ENCODE measurements at regions of chr22 and their contacts with region 1.

Region 1: GRCh38 chr22:35921777-35922176 is 106.8 kb downstream of the RBFOX2 start:
- DNase-seq: peak in 1 of 3 donors; percentile 79
- ATAC-seq: peak; percentile 95
- H3K4me3 ChIP-seq: no peak overlapping the region
- H3K4me1 ChIP-seq: peaks cover 6% of the 10 kb centered on the region
- CTCF ChIP-seq: no peak

Region 2: GRCh38 chr22:35430897-35431322 is 490.9 kb before region 1 on chr22:
- intact Hi-C with region 1: loop called in 1 of 2 experiments (anchors 10 kb)
- DNase-seq: peak; percentile 88 to 94 (median 93)
- ATAC-seq: peak; percentile 99
- H3K4me3 ChIP-seq: no peak overlapping the region
- H3K4me1 ChIP-seq: peaks cover 7% of the 10 kb centered on the region
- CTCF ChIP-seq: peak; percentile 80

Region 3: DNA sequence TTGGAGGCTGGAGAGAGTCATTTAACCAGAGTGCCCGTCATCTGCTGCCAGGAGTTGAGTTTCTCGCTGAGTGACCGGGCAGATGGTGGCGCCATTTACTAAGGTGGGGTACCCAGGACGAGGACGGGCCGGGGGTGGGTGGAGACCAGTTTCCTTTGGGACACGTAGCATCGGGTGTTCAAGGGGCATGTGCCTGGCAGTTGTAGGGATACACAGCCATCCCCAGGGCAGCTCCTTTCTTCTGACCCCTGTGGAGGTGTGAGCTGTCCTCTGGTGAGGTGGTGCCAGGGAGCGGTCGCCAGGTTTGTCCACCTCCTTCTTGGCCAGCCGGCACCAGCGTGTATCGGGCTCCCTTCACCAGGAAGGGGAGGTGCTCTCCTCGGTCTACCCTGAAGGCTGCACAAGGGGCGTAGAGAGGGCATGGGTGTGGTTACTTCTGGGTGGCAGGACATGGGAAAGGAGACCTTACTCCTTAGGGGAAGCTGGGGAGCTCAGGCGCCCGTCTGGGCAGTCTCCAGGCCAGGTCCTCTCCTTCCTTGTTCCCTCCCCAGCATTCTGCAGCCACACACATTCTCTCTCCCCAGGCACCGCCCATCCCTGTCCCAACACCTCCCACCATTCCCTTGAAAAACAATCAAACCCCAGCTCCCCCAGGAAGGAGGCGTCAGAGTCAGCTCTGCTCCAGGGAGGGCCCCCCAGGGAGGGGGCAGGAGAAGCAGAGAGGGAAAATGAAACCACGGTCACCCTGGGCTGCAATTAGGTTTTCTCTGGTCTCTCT is 294.3 kb before region 1 on chr22:
- intact Hi-C with region 1: loop called (anchors 10 kb)
- DNase-seq: peak; percentile 83 to 92 (median 89)
- ATAC-seq: peak; percentile 86
- H3K4me3 ChIP-seq: peak overlapping the region; percentile 18
- H3K4me1 ChIP-seq: peaks cover 4% of the 10 kb centered on the region
- CTCF ChIP-seq: no peak